ENCODE measurements at regions of chr3 and their contacts with region 1.

Region 1: DNA sequence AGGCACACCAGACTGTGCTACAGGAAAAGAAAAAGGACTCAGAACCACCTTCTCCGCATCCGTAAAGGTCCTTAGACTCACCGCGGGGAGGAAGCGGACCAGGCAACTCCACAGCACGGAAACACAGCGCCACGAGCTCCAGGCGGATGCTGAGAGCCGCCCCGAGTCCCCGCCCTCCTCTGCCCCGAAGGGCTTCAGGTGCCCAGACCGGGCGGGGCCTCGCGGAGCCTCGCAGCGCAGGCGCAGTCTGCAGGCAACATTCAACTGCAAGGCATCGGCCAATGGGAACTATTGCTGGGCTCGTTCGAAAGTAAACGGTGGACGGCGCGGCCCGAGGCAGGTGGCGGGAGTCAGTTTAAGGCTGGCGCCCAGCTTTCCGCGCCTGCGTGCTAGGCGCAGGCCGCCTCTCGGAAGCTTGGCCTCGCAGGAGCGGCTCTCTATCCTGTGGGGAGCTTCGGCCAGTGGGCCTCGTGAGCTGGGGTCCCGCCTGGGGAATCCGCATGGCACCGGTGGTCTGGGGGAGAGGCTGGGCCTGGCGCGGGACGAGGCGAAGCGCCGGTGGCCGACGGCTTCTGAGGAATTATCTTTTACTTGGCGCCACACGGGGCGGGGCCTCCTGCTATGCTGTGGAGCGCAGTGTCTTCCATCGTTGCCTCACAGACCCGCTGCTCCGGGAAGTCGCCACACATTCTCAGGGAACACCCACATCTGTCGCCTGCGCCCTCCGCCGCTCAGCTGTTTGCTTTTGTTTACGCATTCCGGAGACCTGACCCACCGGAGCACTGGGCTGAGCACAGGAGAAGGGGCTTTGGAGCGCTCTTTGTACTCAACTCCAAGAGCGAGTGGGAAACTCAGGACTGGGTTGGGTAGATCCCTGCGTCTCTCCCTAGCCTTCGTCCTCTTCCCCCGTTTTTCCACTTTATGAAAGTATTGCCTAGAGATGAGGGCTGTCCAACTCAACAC is at the start of gene TRIM59:
- DNase-seq: peak; percentile 73
- H3K4me3 ChIP-seq: peak within 1 kb of the TSS; percentile 88
- CTCF ChIP-seq: peak; percentile 22

Region 2: GRCh38 chr3:160460033-160460432 is 10.1 kb after region 1 on chr3:
- CTCF ChIA-PET with region 1: interaction called, 16 read pairs
- POLR2A ChIA-PET with region 1: interaction called, 4 read pairs
- DNase-seq: no peak
- H3K4me3 ChIP-seq: no peak overlapping the region
- CTCF ChIP-seq: no peak

Region 3: DNA sequence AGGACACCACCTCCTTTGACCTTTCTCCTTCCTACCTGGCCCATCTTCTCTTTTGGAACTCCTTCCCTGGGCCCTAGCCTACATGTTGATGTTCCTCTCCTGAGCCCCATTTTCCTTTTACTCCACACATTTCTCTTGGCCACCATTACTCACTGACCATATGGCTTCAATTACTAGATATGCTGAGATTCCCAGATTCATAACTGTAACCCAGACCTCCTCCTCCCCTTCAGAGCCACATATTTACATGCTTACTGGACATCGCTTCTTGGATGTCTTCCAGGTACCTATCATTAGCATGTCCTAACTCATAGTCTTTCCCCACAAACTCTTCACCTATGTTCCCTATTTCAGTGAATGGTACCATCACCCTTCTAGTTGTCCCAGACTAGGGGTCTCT is 24.1 kb after region 1 on chr3:
- CTCF ChIA-PET with region 1: interaction called, 18 read pairs
- POLR2A ChIA-PET with region 1: interaction called, 22 read pairs
- DNase-seq: peak; percentile 95
- H3K4me3 ChIP-seq: no peak overlapping the region
- CTCF ChIP-seq: no peak